Lower leg skin (tissue), 4 donors: ENCODE measurements at regions of chr10 and their contacts with region 1.

Region 1: GRCh38 chr10:113139699-113140098 is 189.7 kb downstream of the TCF7L2 start:
- DNase-seq: no peak
- H3K4me3 ChIP-seq: no peak overlapping the region
- CTCF ChIP-seq: no peak
- POLR2A ChIP-seq: no peak

Region 2: DNA sequence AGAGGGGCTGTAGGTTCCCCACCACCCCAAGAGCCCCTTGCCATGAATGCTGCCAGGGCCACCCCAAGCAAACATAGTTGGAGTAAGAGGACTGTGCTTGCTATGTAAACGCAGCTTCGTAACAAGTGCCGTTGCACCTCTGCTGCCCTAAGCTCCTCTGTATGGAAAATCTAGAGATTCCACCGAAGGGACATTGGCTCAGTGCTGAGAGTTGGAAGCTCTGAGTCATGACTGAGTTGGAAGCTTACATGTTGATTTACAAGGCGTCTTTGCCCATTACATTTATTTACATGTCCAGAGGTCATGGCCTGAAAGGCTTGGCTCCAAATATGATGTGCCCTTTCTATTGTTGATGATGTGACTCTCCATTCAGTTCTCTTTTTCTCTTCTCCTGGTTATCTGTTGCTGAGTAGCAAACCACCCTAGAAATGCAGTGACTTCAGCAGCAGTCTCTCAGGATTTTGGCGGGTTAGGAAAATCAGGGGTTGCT is 422.7 kb before region 1 on chr10:
- intact Hi-C with region 1: loop called (anchors 10 kb)
- DNase-seq: no peak
- H3K4me3 ChIP-seq: no peak overlapping the region
- CTCF ChIP-seq: no peak
- POLR2A ChIP-seq: no peak

Region 3: GRCh38 chr10:112949875-112950507 is 189.7 kb before region 1 on chr10 and contains the start of gene TCF7L2:
- intact Hi-C with region 1: no loop called
- DNase-seq: peak; percentile 96 to 99
- H3K4me3 ChIP-seq: peak within 1 kb of the TSS; percentile 45
- CTCF ChIP-seq: no peak
- POLR2A ChIP-seq: no peak
- total RNA-seq, gene TCF7L2: 5.6 to 23.1 (median 16.2) TPM

Region 4: GRCh38 chr10:113221756-113222168 is 82.1 kb after region 1 on chr10:
- intact Hi-C with region 1: no loop called
- DNase-seq: no peak
- H3K4me3 ChIP-seq: no peak overlapping the region
- CTCF ChIP-seq: no peak
- POLR2A ChIP-seq: no peak